ENCODE measurements at regions of chr21 and their contacts with region 1.

Region 1: GRCh38 chr21:22711636-22712035 is 1713.4 kb downstream of the NCAM2 start:
- DNase-seq: peak; percentile 83
- H3K4me3 ChIP-seq: no peak overlapping the region
- H3K27ac ChIP-seq: peak overlapping the region; percentile 73
- H3K4me1 ChIP-seq: peaks cover 30% of the 10 kb centered on the region
- H3K27me3 ChIP-seq: no peaks in the 10 kb centered on the region
- CTCF ChIP-seq: no peak
- POLR2A ChIP-seq: no peak

Region 2: GRCh38 chr21:20999659-21000058 is 1712.0 kb before region 1 on chr21:
- CTCF ChIA-PET with region 1: no interaction called
- POLR2A ChIA-PET with region 1: no interaction called
- dilution Hi-C with region 1: no loop called
- intact Hi-C with region 1: loop called (anchors 2 kb)
- DNase-seq: peak; percentile 46
- H3K4me3 ChIP-seq: no peak overlapping the region
- H3K27ac ChIP-seq: no peak overlapping the region
- H3K4me1 ChIP-seq: peaks cover 9% of the 10 kb centered on the region
- H3K27me3 ChIP-seq: peaks cover 6 to 10% of the 10 kb centered on the region in 2 experiments
- CTCF ChIP-seq: peak; percentile 46 to 58
- POLR2A ChIP-seq: no peak

Region 3: DNA sequence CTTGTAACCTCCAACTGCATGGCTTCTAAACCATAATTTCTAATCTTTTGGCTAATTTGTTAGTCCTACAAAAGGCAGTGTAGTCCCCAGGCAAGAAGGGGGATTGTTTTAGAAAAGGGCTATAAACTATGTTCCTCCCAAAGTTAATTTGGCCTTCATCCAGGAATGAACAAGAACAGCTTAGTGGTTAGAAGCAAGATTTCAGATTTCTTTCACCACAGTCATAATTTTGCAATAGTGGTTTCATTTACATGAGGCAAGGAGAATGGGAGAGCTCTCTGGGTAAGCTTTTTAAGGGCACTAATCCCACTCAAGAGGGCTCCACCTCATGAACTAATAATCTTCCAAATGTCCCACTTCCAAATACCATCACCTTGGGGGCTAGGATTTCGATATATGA is 359.5 kb before region 1 on chr21:
- CTCF ChIA-PET with region 1: no interaction called
- POLR2A ChIA-PET with region 1: no interaction called
- dilution Hi-C with region 1: no loop called
- intact Hi-C with region 1: no loop called
- DNase-seq: no peak
- H3K4me3 ChIP-seq: no peak overlapping the region
- H3K27ac ChIP-seq: no peak overlapping the region
- H3K4me1 ChIP-seq: no peaks in the 10 kb centered on the region
- H3K27me3 ChIP-seq: no peaks in the 10 kb centered on the region
- CTCF ChIP-seq: no peak
- POLR2A ChIP-seq: no peak

Region 4: DNA sequence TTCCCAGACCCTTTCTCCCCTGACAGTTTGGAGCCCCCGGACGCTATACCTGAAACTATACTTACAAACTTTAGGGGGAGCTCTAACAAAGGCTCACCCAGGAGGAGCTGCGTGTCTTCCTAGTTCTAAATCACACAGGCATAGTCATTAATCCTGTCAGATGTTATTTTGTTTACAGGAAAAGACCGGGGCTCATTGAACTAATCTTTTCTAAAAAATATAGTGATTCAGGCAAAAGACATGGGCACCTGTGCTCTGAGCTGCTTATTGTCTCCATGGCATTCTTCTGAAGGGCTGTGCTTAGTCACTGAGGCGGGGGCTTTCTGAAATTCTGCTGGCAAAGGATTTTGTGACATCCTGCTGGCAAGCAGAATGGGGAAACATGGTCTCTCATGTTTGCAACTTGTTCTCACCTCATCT is 136.5 kb before region 1 on chr21:
- CTCF ChIA-PET with region 1: no interaction called
- POLR2A ChIA-PET with region 1: no interaction called
- dilution Hi-C with region 1: no loop called
- intact Hi-C with region 1: loop called (anchors 2 kb)
- DNase-seq: peak; percentile 93
- H3K4me3 ChIP-seq: no peak overlapping the region
- H3K27ac ChIP-seq: no peak overlapping the region
- H3K4me1 ChIP-seq: peaks cover 3% of the 10 kb centered on the region
- H3K27me3 ChIP-seq: no peaks in the 10 kb centered on the region
- CTCF ChIP-seq: peak; percentile 49 to 51
- POLR2A ChIP-seq: no peak

Region 5: DNA sequence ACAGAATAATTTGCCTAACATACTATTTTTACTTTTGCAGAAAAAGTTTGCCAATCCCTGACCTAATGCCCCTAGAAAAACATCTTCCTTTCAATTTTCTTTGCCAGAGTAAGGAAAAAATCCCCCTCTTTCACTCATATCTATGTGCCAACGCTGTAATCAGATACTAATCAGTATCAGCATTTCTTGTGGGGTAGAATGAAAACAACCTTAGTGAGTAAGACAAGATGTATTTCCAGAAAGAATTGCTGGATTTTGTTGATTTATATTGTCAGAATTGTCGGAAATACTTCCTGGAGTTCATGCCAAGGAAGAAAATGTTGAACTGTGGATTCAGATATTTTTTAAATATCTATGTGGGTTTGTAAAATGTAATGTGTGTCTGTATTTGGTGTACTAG is 180.4 kb after region 1 on chr21:
- CTCF ChIA-PET with region 1: no interaction called
- POLR2A ChIA-PET with region 1: no interaction called
- dilution Hi-C with region 1: no loop called
- intact Hi-C with region 1: loop called (anchors 2 kb)
- DNase-seq: peak; percentile 80
- H3K4me3 ChIP-seq: no peak overlapping the region
- H3K27ac ChIP-seq: peak overlapping the region; percentile 79
- H3K4me1 ChIP-seq: peaks cover 33% of the 10 kb centered on the region
- H3K27me3 ChIP-seq: no peaks in the 10 kb centered on the region
- CTCF ChIP-seq: no peak
- POLR2A ChIP-seq: no peak

Region 6: GRCh38 chr21:23162198-23162946 is 450.7 kb after region 1 on chr21:
- CTCF ChIA-PET with region 1: no interaction called
- POLR2A ChIA-PET with region 1: no interaction called
- dilution Hi-C with region 1: no loop called
- intact Hi-C with region 1: loop called (anchors 1 kb)
- DNase-seq: peak; percentile 94
- H3K4me3 ChIP-seq: no peak overlapping the region
- H3K27ac ChIP-seq: peak overlapping the region; percentile 89
- H3K4me1 ChIP-seq: peaks cover 18% of the 10 kb centered on the region
- H3K27me3 ChIP-seq: no peaks in the 10 kb centered on the region
- CTCF ChIP-seq: no peak
- POLR2A ChIP-seq: no peak